Transverse colon (tissue), 4 donors: ENCODE measurements at regions of chr19 and their contacts with region 1.

Region 1: DNA sequence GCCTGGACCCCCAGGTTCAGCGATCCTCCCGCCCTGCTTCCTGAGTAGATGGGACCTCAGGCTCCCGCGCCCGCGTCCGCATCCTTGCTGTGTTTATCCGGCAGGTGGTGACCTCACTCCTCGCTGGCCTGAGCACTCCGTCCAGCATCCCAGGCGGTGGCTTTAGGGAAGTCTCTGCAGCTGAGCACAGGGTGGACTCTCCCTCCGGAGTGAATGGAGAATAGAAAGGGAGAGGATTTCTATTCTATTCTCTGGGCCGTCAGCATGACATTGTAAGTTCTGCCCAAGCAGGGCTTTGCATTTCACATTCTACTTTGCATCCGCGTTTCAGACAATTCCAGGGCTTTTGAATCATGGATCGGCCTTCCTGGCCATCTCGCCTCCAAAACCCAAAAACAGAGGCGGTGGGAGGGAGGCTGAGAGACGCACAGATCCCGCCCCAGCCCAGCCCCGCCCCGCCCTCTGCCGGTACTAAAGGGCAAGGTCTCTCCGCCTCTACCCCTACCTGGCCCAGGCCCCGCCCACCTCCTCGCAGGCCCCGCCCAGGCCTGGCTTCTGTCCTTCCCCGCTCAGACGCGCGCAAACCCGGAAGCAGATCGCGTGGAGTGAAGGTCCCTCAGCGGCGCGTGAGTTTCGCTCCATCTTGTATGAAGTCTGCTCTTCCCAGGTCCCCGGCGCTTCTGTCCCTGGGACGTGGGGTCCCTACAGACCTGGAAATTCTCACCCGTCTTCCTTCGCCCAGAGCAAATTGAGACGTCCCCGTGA is at the start of gene ZNF525:
- DNase-seq: peak; percentile 95
- H3K4me3 ChIP-seq: peak within 1 kb of the TSS; percentile 42 to 99 (median 68)
- H3K27ac ChIP-seq: peak within 1 kb of the TSS; percentile 71 to 88 (median 84)
- H3K4me1 ChIP-seq: peaks cover 0 to 7% (median 1%) of the 10 kb centered on the region in 4 donors
- H3K27me3 ChIP-seq: no peaks in the 10 kb centered on the region
- CTCF ChIP-seq: peak in 4 of 5 experiments; percentile 19 to 30 (median 26)
- EP300 ChIP-seq: no peak
- POLR2A ChIP-seq: peak; percentile 66
- total RNA-seq, gene ZNF525: 9.0 to 34.8 (median 19.5) TPM

Region 2: GRCh38 chr19:52522555-52522954 is 842.8 kb before region 1 on chr19:
- in situ Hi-C with region 1: no loop called
- intact Hi-C with region 1: loop called (anchors 5 kb)
- DNase-seq: no peak
- H3K4me3 ChIP-seq: no peak overlapping the region
- H3K27ac ChIP-seq: no peak overlapping the region
- H3K4me1 ChIP-seq: peaks cover 0 to 5% (median 2%) of the 10 kb centered on the region in 4 donors
- H3K27me3 ChIP-seq: no peaks in the 10 kb centered on the region
- CTCF ChIP-seq: no peak
- EP300 ChIP-seq: no peak
- POLR2A ChIP-seq: no peak